ENCODE measurements at regions of chr19 and their contacts with region 1.

Region 1: DNA sequence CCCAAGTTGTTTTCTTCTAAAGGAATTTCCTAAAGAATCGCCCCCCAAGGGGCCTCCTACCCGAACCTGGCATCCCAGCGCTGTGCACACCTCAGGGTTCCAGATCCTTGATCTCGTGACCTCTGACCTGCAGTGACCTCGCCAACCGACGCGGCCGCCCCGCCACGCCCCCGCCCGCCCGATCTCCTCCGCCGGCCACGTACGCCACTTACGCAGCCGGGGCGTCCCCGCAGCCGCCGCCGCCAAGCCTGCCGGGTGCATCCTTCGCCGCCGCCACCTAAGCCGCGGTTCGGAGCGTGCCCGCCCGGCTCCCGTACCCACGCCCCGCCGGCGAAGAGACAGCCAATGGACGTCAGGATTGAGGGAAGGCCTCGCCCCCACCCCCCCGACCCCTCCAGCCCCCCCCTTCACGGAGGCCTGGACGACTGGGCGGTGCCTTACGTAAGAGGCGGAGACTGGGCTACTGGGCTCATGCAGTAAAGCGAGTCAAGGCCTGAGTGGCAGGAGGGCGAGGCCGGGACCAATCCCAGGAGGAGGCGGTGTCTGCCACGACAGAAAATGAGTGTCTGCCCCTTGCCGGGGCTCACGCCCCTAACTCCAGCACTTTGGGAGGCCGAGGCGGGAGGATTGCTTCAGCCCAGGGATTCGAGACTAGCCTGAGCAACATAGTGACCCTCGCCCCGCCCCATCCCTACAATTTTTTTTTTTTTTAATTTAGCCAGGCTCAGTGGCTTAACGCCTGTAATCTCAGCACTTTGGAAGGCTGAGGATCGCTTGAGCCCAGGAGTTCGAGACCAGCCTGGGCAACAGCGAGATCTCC is at the start of gene YIF1B:
- DNase-seq: peak; percentile 95 to 97
- ATAC-seq: peak; percentile 94 to 97 (median 96)
- H3K4me3 ChIP-seq: peak within 1 kb of the TSS; percentile 47 to 84 (median 70)
- H3K27ac ChIP-seq: peak within 1 kb of the TSS; percentile 40 to 92 (median 82)
- H3K4me1 ChIP-seq: peaks cover 3 to 72% (median 48%) of the 10 kb centered on the region in 9 donors
- H3K27me3 ChIP-seq: no peaks in the 10 kb centered on the region
- CTCF ChIP-seq: peak in 2 of 9 donors; percentile 7 to 13
- total RNA-seq, gene YIF1B: 24.3 to 42.9 (median 30.2) TPM

Region 2: DNA sequence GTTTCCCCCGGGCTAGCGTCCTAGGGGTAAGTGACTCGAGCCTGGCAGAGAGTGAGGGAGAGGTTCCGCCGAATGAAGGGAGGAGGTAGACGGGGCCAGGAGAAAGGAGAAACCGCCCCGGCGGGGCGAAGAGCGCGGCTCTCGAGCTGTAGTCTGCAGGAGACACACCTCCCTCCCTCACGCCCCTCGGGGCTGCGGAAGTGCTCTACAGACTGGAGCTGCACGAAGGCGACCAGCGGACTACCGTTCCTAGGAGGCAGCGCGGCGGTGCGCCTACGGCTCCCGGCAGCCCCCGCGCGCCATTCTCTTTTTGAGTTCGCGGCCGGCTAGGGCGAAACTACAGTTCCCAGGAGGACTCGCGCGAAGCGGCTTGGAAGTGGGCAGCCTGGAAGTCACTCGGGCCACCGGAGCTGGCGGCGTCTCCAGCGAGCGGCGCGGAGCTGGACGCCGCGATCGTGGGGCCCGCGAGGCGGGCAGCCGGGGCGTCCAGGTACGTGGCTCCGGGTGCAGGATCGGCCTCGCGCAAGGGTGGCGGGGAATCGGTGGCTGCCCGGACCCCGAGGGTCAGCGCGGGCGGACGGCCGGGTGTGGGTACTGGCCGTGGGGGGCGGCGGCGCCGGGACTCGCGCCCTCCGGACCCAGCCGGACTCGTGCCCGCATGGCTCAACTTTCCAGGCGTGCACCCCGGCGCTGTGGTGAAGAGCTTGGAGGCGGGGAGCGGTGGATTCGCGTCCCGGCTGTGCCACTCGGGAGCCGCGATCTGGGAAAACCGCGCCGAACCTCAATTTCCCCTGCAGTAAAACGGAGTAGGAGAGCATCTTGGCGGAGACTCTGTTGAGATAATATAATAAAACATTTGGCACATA is 408.8 kb before region 1 on chr19 and contains the start of gene SIPA1L3:
- intact Hi-C with region 1: loop called in 2 of 10 experiments (anchors 10 kb)
- DNase-seq: peak; percentile 94
- ATAC-seq: peak; percentile 98 to 100 (median 99)
- H3K4me3 ChIP-seq: peak within 1 kb of the TSS; percentile 63 to 99 (median 88)
- H3K27ac ChIP-seq: peak within 1 kb of the TSS in 9 of 10 donors; percentile 64 to 88 (median 78)
- H3K4me1 ChIP-seq: peaks cover 4 to 24% (median 18%) of the 10 kb centered on the region in 9 donors
- H3K27me3 ChIP-seq: no peaks in the 10 kb centered on the region
- CTCF ChIP-seq: peak in 2 of 9 donors; percentile 9 to 16
- total RNA-seq, gene SIPA1L3: 5.2 to 24.2 (median 12.7) TPM

Region 3: DNA sequence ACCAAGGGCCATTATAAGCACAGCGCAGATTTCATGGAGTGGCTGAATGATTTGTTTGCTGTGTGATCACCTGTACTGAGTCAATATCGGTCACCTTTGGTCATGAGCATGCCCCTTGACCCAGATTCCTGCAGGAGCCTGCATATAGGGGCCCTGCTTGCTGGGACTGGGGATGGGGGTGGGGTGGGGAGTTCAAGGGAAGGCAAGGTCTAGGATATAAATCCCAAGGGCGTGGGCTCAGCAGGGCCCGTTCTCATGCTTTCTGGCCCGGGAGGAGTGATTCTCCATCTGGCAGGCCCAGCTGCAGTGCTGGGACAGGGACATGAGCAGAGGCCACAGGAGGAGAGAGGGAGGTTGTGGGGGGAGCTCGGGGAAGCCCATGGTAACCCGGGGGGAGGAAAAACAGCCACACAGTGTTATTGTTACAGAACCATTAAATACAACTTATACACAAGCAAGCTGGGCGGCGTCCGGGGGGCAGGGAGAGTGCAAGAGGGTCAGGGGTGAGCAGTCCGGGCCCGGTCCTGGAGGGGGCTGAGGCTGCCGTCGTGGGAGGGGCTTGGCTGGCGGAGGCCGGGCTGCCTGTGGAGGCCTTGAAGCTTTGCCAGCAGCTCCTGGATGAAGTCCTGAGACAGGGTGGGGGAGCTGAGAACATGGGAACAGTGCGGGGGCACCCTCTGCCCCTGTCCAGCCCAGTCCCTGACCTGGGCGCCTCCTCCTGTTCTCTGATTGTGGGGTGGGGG is 64.9 kb before region 1 on chr19:
- intact Hi-C with region 1: loop called in 4 of 10 experiments (anchors 5 kb)
- DNase-seq: peak; percentile 88 to 91
- ATAC-seq: peak; percentile 61 to 84 (median 82)
- H3K4me3 ChIP-seq: peak overlapping the region; percentile 15 to 77 (median 62)
- H3K27ac ChIP-seq: peak overlapping the region; percentile 81 to 98 (median 94)
- H3K4me1 ChIP-seq: peaks cover 6 to 90% (median 42%) of the 10 kb centered on the region in 9 donors
- H3K27me3 ChIP-seq: peaks cover 0 to 15% (median 0%) of the 10 kb centered on the region in 7 donors
- CTCF ChIP-seq: no peak

Region 4: GRCh38 chr19:38270587-38271167 is 45.2 kb before region 1 on chr19:
- intact Hi-C with region 1: loop called in 7 of 10 experiments (anchors 2 to 10 kb)
- DNase-seq: no peak
- ATAC-seq: no peak
- H3K4me3 ChIP-seq: no peak overlapping the region
- H3K27ac ChIP-seq: no peak overlapping the region
- H3K4me1 ChIP-seq: peaks cover 3 to 19% (median 15%) of the 10 kb centered on the region in 9 donors
- H3K27me3 ChIP-seq: no peaks in the 10 kb centered on the region
- CTCF ChIP-seq: no peak

Region 5: GRCh38 chr19:38284422-38284821 is 31.4 kb before region 1 on chr19:
- intact Hi-C with region 1: loop called in 5 of 10 experiments (anchors 2 to 5 kb)
- DNase-seq: no peak
- ATAC-seq: peak in 3 of 8 donors; percentile 21 to 36 (median 28)
- H3K4me3 ChIP-seq: no peak overlapping the region
- H3K27ac ChIP-seq: peak overlapping the region in 2 of 10 donors; percentile 9 to 77
- H3K4me1 ChIP-seq: peaks cover 0 to 53% (median 25%) of the 10 kb centered on the region in 9 donors
- H3K27me3 ChIP-seq: no peaks in the 10 kb centered on the region
- CTCF ChIP-seq: no peak

Region 6: GRCh38 chr19:38506723-38507550 is 191.1 kb after region 1 on chr19:
- intact Hi-C with region 1: no loop called
- DNase-seq: peak; percentile 43 to 72
- ATAC-seq: peak in 7 of 8 donors; percentile 78 to 89 (median 86)
- H3K4me3 ChIP-seq: no peak overlapping the region
- H3K27ac ChIP-seq: no peak overlapping the region
- H3K4me1 ChIP-seq: peaks cover 0 to 4% (median 0%) of the 10 kb centered on the region in 9 donors
- H3K27me3 ChIP-seq: peaks cover 0 to 48% (median 13%) of the 10 kb centered on the region in 7 donors
- CTCF ChIP-seq: no peak

Measured in heart right ventricle (tissue), 16 donors.